ENCODE measurements at regions of chr7 and their contacts with region 1.

Region 1: GRCh38 chr7:143305423-143306070 is 10.4 kb upstream of the CLCN1 start:
- DNase-seq: no peak
- ATAC-seq: peak; percentile 86
- H3K4me3 ChIP-seq: no peak overlapping the region
- H3K27ac ChIP-seq: no peak overlapping the region
- H3K4me1 ChIP-seq: no peaks in the 10 kb centered on the region; the same call in 1 of the 2 replicates
- H3K27me3 ChIP-seq: no peaks in the 10 kb centered on the region
- CTCF ChIP-seq: peak; percentile 33 to 59 (median 43); a peak in 5 of 6 replicates
- EP300 ChIP-seq: no peak
- POLR2A ChIP-seq: no peak
- RAD21 ChIP-seq: peak; percentile 45

Region 2: DNA sequence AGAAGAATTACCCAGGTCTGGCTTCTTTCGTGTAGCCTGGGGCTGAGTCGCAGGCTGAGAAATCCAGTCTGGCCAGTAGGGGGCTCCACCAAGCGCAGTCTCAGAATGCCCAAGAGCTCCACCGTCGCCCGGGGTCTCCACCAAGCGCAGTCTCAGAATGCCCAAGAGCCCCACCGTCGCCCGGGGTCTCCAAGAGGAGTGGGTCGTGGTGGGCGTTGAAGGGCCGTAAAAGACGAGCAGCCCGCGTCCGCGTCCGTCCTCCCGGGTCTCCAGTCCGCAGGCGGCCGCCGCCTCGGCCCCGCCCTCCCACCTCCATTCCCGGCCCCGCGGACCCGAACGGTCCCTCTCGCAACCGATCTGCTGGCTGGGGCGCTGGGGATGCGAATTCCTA is 74.7 kb after region 1 on chr7:
- CTCF ChIA-PET with region 1: interaction called, 4 read pairs
- POLR2A ChIA-PET with region 1: no interaction called
- RAD21 ChIA-PET with region 1: no interaction called
- SMC1A ChIA-PET with region 1: no interaction called
- in situ Hi-C with region 1: no loop called
- intact Hi-C with region 1: loop called (anchors 5 kb)
- DNase-seq: peak; percentile 46
- ATAC-seq: peak; percentile 76
- H3K4me3 ChIP-seq: peak overlapping the region; percentile 99
- H3K27ac ChIP-seq: peak overlapping the region; percentile 92
- H3K4me1 ChIP-seq: peaks cover 15% of the 10 kb centered on the region
- H3K27me3 ChIP-seq: no peaks in the 10 kb centered on the region
- CTCF ChIP-seq: peak; percentile 78 to 89 (median 85)
- EP300 ChIP-seq: no peak
- POLR2A ChIP-seq: no peak
- RAD21 ChIP-seq: peak; percentile 43